ENCODE measurements at regions of chr10 and their contacts with region 1.

Region 1: DNA sequence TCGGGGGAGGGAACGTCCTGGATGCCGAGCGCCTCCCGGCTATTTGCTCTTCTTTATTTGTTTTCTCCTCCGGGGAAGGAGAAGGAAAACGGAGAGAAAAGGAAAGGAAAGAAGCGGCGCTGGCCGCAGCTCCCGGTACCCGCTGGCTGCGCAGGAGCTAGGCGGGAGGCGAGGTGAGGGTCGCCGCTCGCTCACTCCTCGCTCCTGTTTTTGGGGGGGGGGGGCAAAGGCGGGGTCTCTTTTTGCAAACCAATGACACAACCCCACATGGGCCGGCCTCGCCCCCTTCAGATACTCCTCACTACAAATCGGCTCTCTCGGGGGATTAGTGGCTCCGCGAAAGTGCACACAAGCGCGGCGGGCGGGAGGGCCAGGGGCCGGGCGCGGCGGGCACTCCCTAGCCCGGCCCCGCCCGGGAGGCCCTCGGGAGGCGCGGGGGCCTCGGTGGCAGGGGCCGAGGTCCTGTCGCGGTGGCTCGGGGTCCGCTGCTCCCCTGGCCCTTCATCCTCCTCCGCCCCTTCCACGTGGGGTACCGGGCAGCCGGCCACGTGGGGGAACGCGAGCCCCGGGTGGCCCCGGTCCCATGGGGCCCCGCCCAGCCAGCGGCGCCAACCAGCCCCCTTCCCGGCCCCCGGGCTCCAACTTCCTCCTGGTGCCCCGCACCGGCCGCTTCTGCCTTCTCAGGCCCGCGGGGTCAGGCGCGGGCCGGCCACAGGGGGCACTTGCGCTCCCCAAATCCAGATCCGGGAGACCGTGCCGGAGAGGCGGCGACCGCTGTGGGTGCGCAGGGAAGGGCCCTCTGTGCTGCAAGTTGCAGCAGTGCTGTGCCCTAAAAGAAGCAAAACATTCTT is 718 bp upstream of the CTBP2 start:
- DNase-seq: peak; percentile 87
- H3K4me3 ChIP-seq: peak overlapping the region; percentile 92 to 96
- H3K27ac ChIP-seq: peak overlapping the region; percentile 96 to 99
- H3K4me1 ChIP-seq: no peaks in the 10 kb centered on the region
- H3K27me3 ChIP-seq: no peaks in the 10 kb centered on the region
- CTCF ChIP-seq: peak in 3 of 4 experiments; percentile 12 to 46 (median 43)
- POLR2A ChIP-seq: peak; percentile 55

Region 2: GRCh38 chr10:124916585-124917427 is 244.3 kb before region 1 on chr10:
- intact Hi-C with region 1: loop called (anchors 10 kb)
- DNase-seq: peak; percentile 98
- H3K4me3 ChIP-seq: peak overlapping the region; percentile 83 to 95
- H3K27ac ChIP-seq: peak overlapping the region; percentile 98
- H3K4me1 ChIP-seq: peaks cover 6% of the 10 kb centered on the region
- H3K27me3 ChIP-seq: no peaks in the 10 kb centered on the region
- CTCF ChIP-seq: peak in 2 of 4 experiments; percentile 8 to 29
- POLR2A ChIP-seq: peak; percentile 97

Region 3: DNA sequence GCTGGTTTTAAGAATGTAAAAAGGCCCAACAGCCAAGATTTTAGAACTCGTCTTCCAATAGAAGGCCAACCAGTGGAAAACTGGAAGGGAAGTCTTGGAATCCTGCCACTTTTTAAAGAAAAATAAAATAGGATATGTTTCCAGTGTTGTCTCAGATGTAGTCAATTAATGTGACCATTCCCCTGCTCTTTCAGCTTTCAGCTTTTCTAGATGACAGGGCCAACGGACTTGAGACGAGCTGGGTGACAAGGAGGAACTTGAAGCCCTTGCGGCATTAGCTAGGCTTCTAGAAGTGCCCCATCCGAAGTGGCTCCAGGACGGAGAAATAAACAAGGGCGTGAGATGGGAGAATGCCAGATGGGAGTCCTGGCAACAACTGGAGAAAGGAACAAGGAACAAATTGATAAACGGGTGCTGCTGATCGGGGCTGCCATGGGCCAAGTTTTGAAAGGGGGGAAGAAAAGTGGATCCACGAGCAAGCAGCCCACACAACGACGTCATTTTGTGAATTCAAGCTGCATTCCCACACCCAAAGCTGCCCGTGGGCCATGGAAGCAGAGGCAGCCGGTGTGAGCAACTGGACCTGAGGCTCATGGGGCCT is 43.0 kb before region 1 on chr10:
- intact Hi-C with region 1: loop called (anchors 5 kb)
- DNase-seq: peak; percentile 72
- H3K4me3 ChIP-seq: no peak overlapping the region
- H3K27ac ChIP-seq: peak overlapping the region; percentile 61 to 69
- H3K4me1 ChIP-seq: peaks cover 40% of the 10 kb centered on the region
- H3K27me3 ChIP-seq: no peaks in the 10 kb centered on the region
- CTCF ChIP-seq: no peak
- POLR2A ChIP-seq: no peak

Region 4: GRCh38 chr10:125514206-125515186 is 353.4 kb after region 1 on chr10:
- intact Hi-C with region 1: loop called (anchors 5 kb)
- DNase-seq: no peak
- H3K4me3 ChIP-seq: no peak overlapping the region
- H3K27ac ChIP-seq: no peak overlapping the region
- H3K4me1 ChIP-seq: no peaks in the 10 kb centered on the region
- H3K27me3 ChIP-seq: no peaks in the 10 kb centered on the region
- CTCF ChIP-seq: no peak
- POLR2A ChIP-seq: no peak

Region 5: DNA sequence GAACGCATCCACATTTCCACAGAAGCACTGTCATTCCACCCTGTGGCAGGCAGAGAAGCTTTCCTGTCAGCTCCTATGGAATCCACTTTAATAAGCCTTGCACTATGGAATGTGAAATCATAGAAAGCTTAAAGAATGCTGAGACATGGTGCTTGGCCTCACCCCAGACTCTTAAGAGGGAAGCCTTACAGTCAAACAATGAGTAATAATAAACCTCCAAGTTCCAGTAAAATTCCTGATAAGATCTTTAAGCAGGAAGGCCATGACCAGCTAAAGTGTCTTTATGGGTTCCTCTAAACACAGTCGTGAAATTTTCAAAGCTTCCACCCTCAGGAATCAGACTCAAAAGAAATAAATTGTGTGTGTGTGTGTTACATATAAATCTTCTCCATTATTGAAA is 533.8 kb after region 1 on chr10:
- intact Hi-C with region 1: loop called (anchors 5 kb)
- DNase-seq: peak; percentile 53
- H3K4me3 ChIP-seq: no peak overlapping the region
- H3K27ac ChIP-seq: no peak overlapping the region
- H3K4me1 ChIP-seq: peaks cover 7% of the 10 kb centered on the region
- H3K27me3 ChIP-seq: no peaks in the 10 kb centered on the region
- CTCF ChIP-seq: no peak
- POLR2A ChIP-seq: no peak